ENCODE measurements at regions of chr13 and their contacts with region 1.

Region 1: GRCh38 chr13:29508130-29508875 is 87.2 kb downstream of the SLC7A1 start:
- DNase-seq: peak; percentile 90
- H3K4me3 ChIP-seq: peak overlapping the region in 1 of 2 experiments; percentile 32; a peak in 1 of 4 replicates
- H3K27ac ChIP-seq: peak overlapping the region in 1 of 2 experiments; percentile 78; a peak in 2 of 4 replicates
- H3K4me1 ChIP-seq: peaks cover 0 to 26% of the 10 kb centered on the region in 2 experiments; a peak in 2 of 4 replicates
- H3K27me3 ChIP-seq: no peaks in the 10 kb centered on the region
- CTCF ChIP-seq: peak; percentile 96
- EP300 ChIP-seq: peak in 1 of 2 experiments; percentile 53; a peak in 1 of 4 replicates
- RAD21 ChIP-seq: peak; percentile 95

Region 2: GRCh38 chr13:28707629-28708427 is 800.5 kb before region 1 on chr13:
- CTCF ChIA-PET with region 1: no interaction called
- POLR2A ChIA-PET with region 1: no interaction called
- DNase-seq: no peak
- H3K4me3 ChIP-seq: peak overlapping the region in 1 of 2 experiments; percentile 47; a peak in 2 of 4 replicates
- H3K27ac ChIP-seq: peak overlapping the region in 1 of 2 experiments; percentile 52; a peak in 1 of 4 replicates
- H3K4me1 ChIP-seq: peaks cover 0 to 3% of the 10 kb centered on the region in 2 experiments; a peak in 2 of 4 replicates
- H3K27me3 ChIP-seq: no peaks in the 10 kb centered on the region
- CTCF ChIP-seq: no peak
- EP300 ChIP-seq: peak in 1 of 2 experiments; percentile 8; a peak in 1 of 4 replicates
- RAD21 ChIP-seq: no peak

Region 3: GRCh38 chr13:29310806-29311205 is 197.5 kb before region 1 on chr13:
- CTCF ChIA-PET with region 1: no interaction called
- POLR2A ChIA-PET with region 1: no interaction called
- DNase-seq: no peak
- H3K4me3 ChIP-seq: no peak overlapping the region
- H3K27ac ChIP-seq: no peak overlapping the region
- H3K4me1 ChIP-seq: no peaks in the 10 kb centered on the region
- H3K27me3 ChIP-seq: no peaks in the 10 kb centered on the region
- CTCF ChIP-seq: no peak
- EP300 ChIP-seq: no peak
- RAD21 ChIP-seq: no peak

Region 4: GRCh38 chr13:29484236-29484635 is 24.1 kb before region 1 on chr13:
- CTCF ChIA-PET with region 1: interaction called, 21 read pairs
- POLR2A ChIA-PET with region 1: no interaction called
- DNase-seq: peak; percentile 71
- H3K4me3 ChIP-seq: no peak overlapping the region
- H3K27ac ChIP-seq: peak overlapping the region in 1 of 2 experiments; percentile 58; a peak in 2 of 4 replicates
- H3K4me1 ChIP-seq: peaks cover 0 to 26% of the 10 kb centered on the region in 2 experiments; a peak in 2 of 4 replicates
- H3K27me3 ChIP-seq: no peaks in the 10 kb centered on the region
- CTCF ChIP-seq: no peak
- EP300 ChIP-seq: no peak
- RAD21 ChIP-seq: no peak

Region 5: GRCh38 chr13:29537736-29538651 is 29.7 kb after region 1 on chr13:
- CTCF ChIA-PET with region 1: interaction called, 20 read pairs
- POLR2A ChIA-PET with region 1: no interaction called
- DNase-seq: no peak
- H3K4me3 ChIP-seq: no peak overlapping the region
- H3K27ac ChIP-seq: no peak overlapping the region; a peak in 1 of 4 replicates
- H3K4me1 ChIP-seq: peaks cover 0 to 17% of the 10 kb centered on the region in 2 experiments; a peak in 2 of 4 replicates
- H3K27me3 ChIP-seq: no peaks in the 10 kb centered on the region
- CTCF ChIP-seq: no peak
- EP300 ChIP-seq: no peak
- RAD21 ChIP-seq: no peak

Region 6: DNA sequence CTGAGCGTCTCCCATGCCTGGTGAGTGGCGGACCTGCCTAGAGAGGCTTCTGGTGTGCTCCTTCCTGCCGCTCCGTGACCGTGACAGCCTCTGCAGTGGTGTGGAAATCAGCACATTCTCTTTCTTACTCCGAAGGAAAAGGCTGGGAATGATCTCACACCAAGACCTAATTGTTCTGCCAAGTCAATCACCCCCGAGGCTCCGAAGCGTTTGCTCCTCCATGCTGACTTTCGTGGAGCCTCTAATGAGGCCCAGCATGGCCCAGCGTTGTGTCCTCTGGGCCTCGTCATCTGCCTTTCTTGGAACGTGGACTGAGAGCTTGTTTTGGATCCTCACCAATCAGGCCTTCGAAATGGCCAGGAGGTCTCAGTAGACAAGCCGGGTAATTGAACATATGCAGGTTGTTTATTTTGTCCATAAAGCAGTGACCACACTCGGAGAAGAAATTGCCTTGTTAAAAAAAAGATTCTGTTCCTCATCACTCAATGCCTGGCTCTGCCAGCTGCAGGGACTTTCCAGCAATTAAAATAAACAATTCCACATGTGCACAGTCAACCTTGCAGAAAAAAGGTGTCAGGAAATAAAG is 235.0 kb after region 1 on chr13:
- CTCF ChIA-PET with region 1: interaction called, 18 read pairs
- POLR2A ChIA-PET with region 1: no interaction called
- DNase-seq: peak; percentile 49
- H3K4me3 ChIP-seq: no peak overlapping the region
- H3K27ac ChIP-seq: peak overlapping the region in 1 of 2 experiments; percentile 86; a peak in 2 of 4 replicates
- H3K4me1 ChIP-seq: peaks cover 0 to 16% of the 10 kb centered on the region in 2 experiments; a peak in 2 of 4 replicates
- H3K27me3 ChIP-seq: no peaks in the 10 kb centered on the region; the same call in 1 of the 2 replicates
- CTCF ChIP-seq: no peak
- EP300 ChIP-seq: peak in 1 of 2 experiments; percentile 52; a peak in 1 of 4 replicates
- RAD21 ChIP-seq: no peak

Region 7: DNA sequence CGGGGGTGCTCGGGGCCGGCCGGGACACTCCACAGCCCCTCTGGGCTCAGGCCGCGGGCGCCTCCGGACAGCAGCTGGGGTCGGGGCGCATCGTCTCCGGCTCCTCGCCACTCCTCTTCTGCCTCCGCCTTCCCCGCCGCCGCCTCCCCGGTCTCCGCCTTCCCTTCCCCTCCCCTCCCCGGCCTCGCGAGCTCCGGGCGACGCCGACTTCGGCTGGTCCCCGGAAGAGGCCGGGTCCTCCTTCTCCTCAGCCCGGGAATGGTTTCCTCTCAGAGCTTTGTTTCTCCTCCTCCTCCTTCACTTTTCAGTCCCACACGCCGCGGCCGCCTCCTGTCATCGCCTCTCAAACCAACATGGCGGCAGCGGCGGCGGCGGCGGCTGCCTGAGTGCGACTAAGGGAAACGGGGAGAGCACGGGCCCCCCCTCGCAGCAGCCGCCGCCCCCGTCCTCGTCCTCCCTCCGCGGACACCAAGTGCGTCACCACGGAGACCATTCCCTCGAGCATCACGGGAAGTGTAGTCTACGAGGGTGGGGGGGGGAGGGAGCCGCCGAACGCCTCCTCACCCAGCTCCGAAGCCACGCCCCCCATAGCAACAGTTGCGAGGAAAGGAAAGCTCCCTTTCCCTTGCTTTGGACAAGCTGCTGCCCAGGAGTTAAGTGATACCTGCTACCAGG is 342.1 kb after region 1 on chr13 and contains the start of gene UBL3:
- CTCF ChIA-PET with region 1: interaction called, 20 read pairs
- POLR2A ChIA-PET with region 1: interaction called, 3 read pairs
- DNase-seq: peak; percentile 97
- H3K4me3 ChIP-seq: peak within 1 kb of the TSS; percentile 73 to 97
- H3K27ac ChIP-seq: peak within 1 kb of the TSS; percentile 96
- H3K4me1 ChIP-seq: peaks cover 11 to 24% of the 10 kb centered on the region in 2 experiments; a peak in 3 of 4 replicates
- H3K27me3 ChIP-seq: no peaks in the 10 kb centered on the region
- CTCF ChIP-seq: no peak
- EP300 ChIP-seq: no peak
- RAD21 ChIP-seq: no peak
- polyA plus RNA-seq, gene UBL3: 5.8 and 7.4 TPM in 2 replicates

Region 8: GRCh38 chr13:30132623-30133553 is 624.6 kb after region 1 on chr13:
- CTCF ChIA-PET with region 1: interaction called, 10 read pairs
- POLR2A ChIA-PET with region 1: no interaction called
- DNase-seq: peak; percentile 91
- H3K4me3 ChIP-seq: peak overlapping the region in 1 of 2 experiments; percentile 28; a peak in 1 of 4 replicates
- H3K27ac ChIP-seq: peak overlapping the region in 1 of 2 experiments; percentile 30; a peak in 1 of 4 replicates
- H3K4me1 ChIP-seq: peaks cover 0 to 15% of the 10 kb centered on the region in 2 experiments; a peak in 2 of 4 replicates
- H3K27me3 ChIP-seq: no peaks in the 10 kb centered on the region
- CTCF ChIP-seq: peak; percentile 92
- EP300 ChIP-seq: 0 out of 4 replicates have a peak, but pooled peaks of 1 of the 2 experiments have one; percentile 14
- RAD21 ChIP-seq: peak; percentile 99

Measured in SK-N-SH (cell line).